ENCODE measurements at regions of chr9 and their contacts with region 1.

Region 1: DNA sequence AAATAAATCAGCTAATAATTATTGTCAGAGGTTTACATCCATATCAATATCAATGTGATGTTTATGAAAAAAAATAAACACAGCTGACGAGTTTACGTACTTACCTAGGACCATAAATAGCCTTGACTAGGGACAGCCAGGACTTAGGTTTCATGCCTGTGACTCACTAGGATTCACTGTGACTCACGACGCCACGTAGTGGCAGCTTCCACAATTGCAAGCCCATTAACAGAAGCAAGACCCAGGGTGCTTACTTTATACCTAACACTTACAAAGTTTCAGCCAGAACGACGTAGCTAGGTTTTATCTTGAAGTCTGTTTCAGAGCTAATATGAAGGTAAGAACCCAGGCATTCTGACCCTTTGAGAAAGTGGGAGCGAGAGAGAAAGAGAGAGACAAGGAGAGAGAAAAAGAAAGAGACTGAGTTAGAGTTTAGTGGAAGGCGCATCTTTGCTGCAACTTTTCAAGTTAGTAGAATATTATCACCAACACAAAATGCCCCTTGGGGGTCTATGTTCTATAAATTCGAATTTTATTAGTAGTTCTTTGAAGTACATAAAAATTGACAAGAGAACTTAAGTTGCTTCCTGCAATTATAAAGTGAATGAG is 191.2 kb downstream of the GNA14 start:
- DNase-seq: peak; percentile 84 to 93 (median 85)
- H3K4me3 ChIP-seq: no peak overlapping the region
- H3K27ac ChIP-seq: no peak overlapping the region
- H3K4me1 ChIP-seq: peaks cover 1 to 6% (median 4%) of the 10 kb centered on the region in 3 donors
- H3K27me3 ChIP-seq: no peaks in the 10 kb centered on the region
- CTCF ChIP-seq: peak; percentile 89

Region 2: GRCh38 chr9:77648234-77649120 is 191.5 kb after region 1 on chr9 and contains the start of gene GNA14:
- intact Hi-C with region 1: loop called (anchors 10 kb)
- DNase-seq: peak; percentile 45 to 87 (median 65)
- H3K4me3 ChIP-seq: peak within 1 kb of the TSS; percentile 30 to 78 (median 62)
- H3K27ac ChIP-seq: peak within 1 kb of the TSS; percentile 61 to 72
- H3K4me1 ChIP-seq: peaks cover 2 to 6% (median 4%) of the 10 kb centered on the region in 3 donors
- H3K27me3 ChIP-seq: peaks cover 5% of the 10 kb centered on the region
- CTCF ChIP-seq: no peak
- total RNA-seq, gene GNA14: 10.4 TPM

Region 3: DNA sequence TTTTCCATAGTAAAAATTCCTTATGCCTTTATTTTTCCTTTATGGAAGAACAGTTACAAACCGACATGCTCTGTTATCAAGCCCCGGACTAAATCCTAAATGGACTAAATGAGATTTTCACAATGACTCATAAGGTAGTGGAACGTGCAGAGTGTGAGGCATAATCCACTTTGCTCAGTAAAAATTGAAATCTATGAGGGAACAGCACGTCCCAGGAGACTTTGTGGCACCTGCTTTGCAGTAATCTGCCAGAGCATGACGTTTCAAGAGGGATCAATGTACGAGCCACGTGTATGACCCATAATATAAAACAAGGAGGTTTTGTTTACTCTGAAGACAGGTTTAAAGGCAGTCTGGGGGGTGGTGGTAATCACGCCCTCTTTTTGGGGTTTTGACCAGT is 275.0 kb after region 1 on chr9:
- intact Hi-C with region 1: loop called (anchors 10 kb)
- DNase-seq: no peak
- H3K4me3 ChIP-seq: no peak overlapping the region
- H3K27ac ChIP-seq: no peak overlapping the region
- H3K4me1 ChIP-seq: no peaks in the 10 kb centered on the region
- H3K27me3 ChIP-seq: no peaks in the 10 kb centered on the region
- CTCF ChIP-seq: no peak

Measured in kidney (tissue), 22 donors.